Dendritic cell treated with granulocyte-macrophage colony-stimulating factor and Interleukin-4, amounts not matched to agents 40 ng/mL and 50 ng/mL, for 4 days (primary cell): ENCODE measurements at regions of chr2 and their contacts with region 1.

Region 1: GRCh38 chr2:203786549-203787351 is 80.3 kb downstream of the CD28 start:
- H3K4me3 Mint-ChIP-seq: no peak overlapping the region
- H3K27ac Mint-ChIP-seq: peak overlapping the region; percentile 80
- H3K4me1 Mint-ChIP-seq: peaks cover 43% of the 10 kb centered on the region
- H3K27me3 Mint-ChIP-seq: peaks cover 3% of the 10 kb centered on the region

Region 2: GRCh38 chr2:203656522-203657287 is 130.0 kb before region 1 on chr2:
- intact Hi-C with region 1: loop called (anchors 5 kb)
- H3K4me3 Mint-ChIP-seq: no peak overlapping the region
- H3K27ac Mint-ChIP-seq: peak overlapping the region; percentile 82
- H3K4me1 Mint-ChIP-seq: peaks cover 70% of the 10 kb centered on the region
- H3K27me3 Mint-ChIP-seq: no peaks in the 10 kb centered on the region

Region 3: DNA sequence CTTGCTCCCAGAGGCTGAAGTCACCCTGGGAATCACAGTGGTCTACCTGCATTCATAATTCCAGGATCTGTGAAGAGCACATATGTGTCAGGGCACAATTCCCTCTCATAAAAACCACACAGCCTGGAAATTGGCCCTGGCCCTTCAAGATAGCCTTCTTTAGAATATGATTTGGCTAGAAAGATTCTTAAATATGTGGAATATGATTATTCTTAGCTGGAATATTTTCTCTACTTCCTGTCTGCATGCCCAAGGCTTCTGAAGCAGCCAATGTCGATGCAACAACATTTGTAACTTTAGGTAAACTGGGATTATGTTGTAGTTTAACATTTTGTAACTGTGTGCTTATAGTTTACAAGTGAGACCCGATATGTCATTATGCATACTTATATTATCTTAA is 174.1 kb after region 1 on chr2:
- intact Hi-C with region 1: no loop called
- H3K4me3 Mint-ChIP-seq: no peak overlapping the region
- H3K27ac Mint-ChIP-seq: no peak overlapping the region
- H3K4me1 Mint-ChIP-seq: no peaks in the 10 kb centered on the region
- H3K27me3 Mint-ChIP-seq: peaks cover 4% of the 10 kb centered on the region